ENCODE measurements at regions of chr14 and their contacts with region 1.

Region 1: GRCh38 chr14:36315159-36315853 is 5.1 kb downstream of the MBIP start:
- DNase-seq: peak; percentile 80
- H3K4me3 Mint-ChIP-seq: peak overlapping the region; percentile 43
- H3K27ac Mint-ChIP-seq: peak overlapping the region; percentile 89
- H3K4me1 Mint-ChIP-seq: peaks cover 40% of the 10 kb centered on the region
- H3K27me3 Mint-ChIP-seq: no peaks in the 10 kb centered on the region

Region 2: GRCh38 chr14:34461334-34462131 is 1853.8 kb before region 1 on chr14:
- CTCF ChIA-PET with region 1: no interaction called
- intact Hi-C with region 1: loop called (anchors 5 kb)
- DNase-seq: peak; percentile 41
- H3K4me3 Mint-ChIP-seq: peak overlapping the region; percentile 87
- H3K27ac Mint-ChIP-seq: peak overlapping the region; percentile 65
- H3K4me1 Mint-ChIP-seq: peaks cover 16% of the 10 kb centered on the region
- H3K27me3 Mint-ChIP-seq: no peaks in the 10 kb centered on the region

Region 3: GRCh38 chr14:35046048-35046741 is 1269.1 kb before region 1 on chr14 and contains the start of gene FAM177A1:
- CTCF ChIA-PET with region 1: no interaction called
- intact Hi-C with region 1: loop called (anchors 10 kb)
- DNase-seq: peak; percentile 99
- H3K4me3 Mint-ChIP-seq: peak within 1 kb of the TSS; percentile 89
- H3K27ac Mint-ChIP-seq: peak within 1 kb of the TSS; percentile 98
- H3K4me1 Mint-ChIP-seq: peaks cover 25% of the 10 kb centered on the region
- H3K27me3 Mint-ChIP-seq: no peaks in the 10 kb centered on the region
- total RNA-seq, gene FAM177A1: 55.0 to 58.5 TPM

Region 4: DNA sequence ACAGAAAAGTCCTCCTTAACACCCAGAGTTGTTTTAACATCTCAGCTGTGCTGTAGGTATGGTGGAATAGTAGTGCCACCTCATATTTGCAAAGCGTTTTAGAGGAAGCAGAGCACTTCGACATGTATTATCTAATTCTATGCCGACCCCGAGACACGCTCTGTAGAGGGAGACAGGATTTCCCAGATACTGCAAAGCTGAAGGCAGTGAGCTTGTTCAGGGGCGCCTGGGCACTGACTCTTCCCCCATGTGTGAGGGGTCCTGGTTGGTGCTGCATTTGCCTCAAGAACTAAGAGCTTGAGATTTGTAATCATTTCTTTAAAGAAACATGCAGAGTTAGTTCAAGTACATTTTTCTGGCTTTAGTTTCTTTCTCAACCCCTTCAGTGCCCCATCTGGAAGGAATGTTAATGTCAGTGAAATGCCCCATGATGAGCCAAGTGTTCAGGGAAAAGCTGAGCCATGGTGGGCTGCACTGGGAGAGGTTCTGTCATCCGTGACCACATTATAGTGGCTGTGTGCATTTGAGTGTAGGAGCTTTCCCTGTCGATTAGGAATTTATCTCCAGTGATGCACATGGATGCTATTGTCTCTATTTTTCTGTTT is 61.2 kb before region 1 on chr14:
- CTCF ChIA-PET with region 1: no interaction called
- intact Hi-C with region 1: no loop called
- DNase-seq: no peak
- H3K4me3 Mint-ChIP-seq: no peak overlapping the region
- H3K27ac Mint-ChIP-seq: no peak overlapping the region
- H3K4me1 Mint-ChIP-seq: no peaks in the 10 kb centered on the region
- H3K27me3 Mint-ChIP-seq: peaks cover 8% of the 10 kb centered on the region

Region 5: DNA sequence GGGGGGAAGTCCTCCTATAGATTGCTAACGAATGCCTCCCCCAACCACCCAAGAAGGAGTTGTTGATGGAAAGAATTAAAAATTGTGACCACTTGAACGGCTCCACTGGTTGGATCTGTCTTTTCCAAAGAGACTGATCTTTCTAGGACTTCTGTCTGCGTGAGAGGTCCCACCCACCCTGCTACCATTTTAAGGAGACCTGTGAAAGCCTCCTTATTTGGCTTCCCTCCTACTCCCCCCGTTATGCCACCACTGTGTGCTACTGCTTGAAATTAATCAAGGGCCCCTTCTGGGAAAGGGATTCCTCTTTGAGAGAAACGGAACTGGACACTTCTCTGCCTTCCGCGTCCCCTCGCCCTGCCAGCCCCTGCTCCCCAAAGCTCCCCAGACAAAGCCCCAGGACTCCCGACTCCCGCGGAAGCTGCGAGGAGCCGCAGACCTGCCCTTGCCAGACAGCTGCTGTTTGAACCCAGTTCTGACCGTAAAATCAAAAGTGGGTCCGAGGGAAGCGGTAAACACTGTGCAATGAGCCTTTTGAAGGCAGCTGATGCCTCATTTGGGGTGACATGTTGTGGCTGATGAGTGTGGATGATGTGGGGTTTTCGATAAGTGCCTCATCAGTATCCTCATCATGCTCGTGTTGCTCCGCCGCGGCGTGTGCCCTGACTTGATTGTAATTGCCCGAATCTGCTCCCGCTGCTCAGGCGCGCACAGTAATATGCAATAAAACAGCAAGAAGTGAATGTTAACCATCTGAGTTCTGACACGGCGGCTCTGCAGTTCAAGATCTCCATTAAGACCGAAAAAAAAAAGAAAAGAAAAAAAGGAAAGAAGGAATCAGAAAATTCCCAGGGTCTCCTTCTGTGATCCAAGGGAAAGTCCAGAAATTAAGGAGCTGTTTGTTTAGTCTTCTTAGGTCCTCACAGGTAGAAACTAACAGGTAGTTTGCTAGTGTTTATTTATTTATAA is 43.1 kb before region 1 on chr14:
- CTCF ChIA-PET with region 1: no interaction called
- intact Hi-C with region 1: loop called (anchors 1 kb)
- DNase-seq: peak; percentile 61
- H3K4me3 Mint-ChIP-seq: peak overlapping the region; percentile 69
- H3K27ac Mint-ChIP-seq: no peak overlapping the region
- H3K4me1 Mint-ChIP-seq: peaks cover 18% of the 10 kb centered on the region
- H3K27me3 Mint-ChIP-seq: peaks cover 49% of the 10 kb centered on the region

Region 6: GRCh38 chr14:36478782-36479181 is 163.5 kb after region 1 on chr14:
- CTCF ChIA-PET with region 1: no interaction called
- intact Hi-C with region 1: loop called (anchors 5 kb)
- DNase-seq: peak; percentile 17
- H3K4me3 Mint-ChIP-seq: no peak overlapping the region
- H3K27ac Mint-ChIP-seq: no peak overlapping the region
- H3K4me1 Mint-ChIP-seq: peaks cover 4% of the 10 kb centered on the region
- H3K27me3 Mint-ChIP-seq: peaks cover 15% of the 10 kb centered on the region

Region 7: DNA sequence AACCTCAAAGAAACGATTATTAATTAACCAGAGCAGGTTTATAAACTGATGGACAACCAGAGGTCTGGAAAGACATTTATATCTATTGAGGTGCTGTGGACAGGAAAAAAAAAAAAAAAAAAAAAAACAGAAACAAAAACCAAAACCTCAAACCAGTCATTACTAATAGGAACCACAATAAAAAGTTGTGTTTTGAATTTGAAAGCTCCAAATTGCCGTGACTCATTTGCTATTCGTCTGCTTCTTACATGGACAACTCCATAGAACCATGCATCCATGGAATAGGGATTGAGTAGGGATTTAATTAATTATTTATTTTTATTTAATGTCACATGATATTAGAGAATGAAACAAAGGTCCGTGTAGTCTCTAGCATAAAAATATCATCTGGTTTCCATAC is 1758.3 kb after region 1 on chr14:
- CTCF ChIA-PET with region 1: no interaction called
- intact Hi-C with region 1: loop called (anchors 5 kb)
- DNase-seq: no peak
- H3K4me3 Mint-ChIP-seq: no peak overlapping the region
- H3K27ac Mint-ChIP-seq: no peak overlapping the region
- H3K4me1 Mint-ChIP-seq: peaks cover 66% of the 10 kb centered on the region
- H3K27me3 Mint-ChIP-seq: no peaks in the 10 kb centered on the region